Heart right ventricle (tissue), 16 donors: ENCODE measurements at regions of chr16 and their contacts with region 1.

Region 1: DNA sequence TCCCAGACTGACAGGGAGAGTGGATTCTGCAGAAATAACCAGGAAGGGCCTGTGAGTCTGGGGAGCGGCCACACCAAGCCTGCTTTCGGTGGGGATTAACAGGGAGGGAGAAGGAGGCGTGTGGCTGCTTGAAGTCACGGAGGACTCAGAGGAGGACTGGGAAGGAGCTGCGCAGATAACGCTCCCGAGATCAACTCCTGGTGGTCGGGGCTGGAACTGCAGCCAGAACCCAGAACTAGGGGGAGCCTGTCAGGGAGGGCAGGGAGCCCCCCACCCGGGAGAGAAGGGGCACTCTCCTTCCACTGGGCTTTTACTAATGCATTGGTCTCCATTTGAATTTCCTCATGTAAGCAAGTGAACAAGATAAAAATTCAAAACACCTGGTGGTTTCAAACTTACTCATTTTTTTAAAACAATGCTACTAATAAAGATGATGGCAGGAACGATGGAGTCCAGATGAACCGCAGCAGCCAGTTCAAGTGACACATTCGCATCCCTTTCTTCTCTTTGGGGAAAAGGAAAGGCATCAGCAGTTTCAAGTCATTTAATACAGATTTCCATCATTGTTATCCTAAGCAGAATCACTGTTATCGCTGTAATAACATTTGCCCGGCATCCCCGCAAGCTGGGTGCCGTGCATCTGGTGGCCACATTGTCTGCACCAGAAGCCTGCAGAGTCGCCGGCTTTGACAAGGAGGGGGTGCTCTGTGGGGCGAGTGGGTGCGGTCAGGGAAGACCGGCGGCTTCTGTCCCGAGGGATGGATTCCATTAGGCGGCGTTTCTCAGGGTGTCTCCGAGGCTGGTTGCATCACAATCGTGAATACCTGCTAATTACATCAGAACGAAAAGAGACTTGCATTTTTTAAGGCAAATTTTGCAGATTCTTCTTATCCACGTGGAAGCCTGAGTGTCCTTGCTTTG is 183.0 kb downstream of the FOXL1 start:
- DNase-seq: peak; percentile 62 to 79
- ATAC-seq: peak in 7 of 8 donors; percentile 72 to 89 (median 82)
- H3K4me3 ChIP-seq: peak overlapping the region in 6 of 10 donors; percentile 2 to 28 (median 24)
- H3K27ac ChIP-seq: no peak overlapping the region
- H3K4me1 ChIP-seq: peaks cover 0 to 22% (median 6%) of the 10 kb centered on the region in 9 donors
- H3K27me3 ChIP-seq: peaks cover 0 to 93% (median 62%) of the 10 kb centered on the region in 7 donors
- CTCF ChIP-seq: peak; percentile 73 to 85 (median 79)

Region 2: GRCh38 chr16:86570558-86571529 is 190.5 kb before region 1 on chr16:
- intact Hi-C with region 1: loop called in 8 of 10 experiments (anchors 5 to 10 kb)
- DNase-seq: no peak
- ATAC-seq: no peak
- H3K4me3 ChIP-seq: peak overlapping the region in 9 of 10 donors; percentile 33 to 66 (median 60)
- H3K27ac ChIP-seq: peak overlapping the region in 9 of 10 donors; percentile 13 to 90 (median 61)
- H3K4me1 ChIP-seq: peaks cover 0 to 48% (median 13%) of the 10 kb centered on the region in 9 donors
- H3K27me3 ChIP-seq: peaks cover 4 to 100% (median 91%) of the 10 kb centered on the region in 7 donors
- CTCF ChIP-seq: no peak